ENCODE measurements at regions of chr20 and their contacts with region 1.

Region 1: GRCh38 chr20:58388882-58389323 is at the start of gene VAPB:
- DNase-seq: peak; percentile 98
- H3K4me3 ChIP-seq: peak within 1 kb of the TSS; percentile 78 to 85 (median 84)
- H3K27ac ChIP-seq: peak within 1 kb of the TSS; percentile 90 to 95 (median 93)
- H3K4me1 ChIP-seq: peaks cover 38 to 48% (median 42%) of the 10 kb centered on the region in 4 donors
- H3K27me3 ChIP-seq: no peaks in the 10 kb centered on the region
- CTCF ChIP-seq: peak in 2 of 3 experiments; percentile 10
- EP300 ChIP-seq: peak; percentile 75
- POLR2A ChIP-seq: peak; percentile 43
- total RNA-seq, gene VAPB: 24.9 to 39.0 (median 28.3) TPM

Region 2: DNA sequence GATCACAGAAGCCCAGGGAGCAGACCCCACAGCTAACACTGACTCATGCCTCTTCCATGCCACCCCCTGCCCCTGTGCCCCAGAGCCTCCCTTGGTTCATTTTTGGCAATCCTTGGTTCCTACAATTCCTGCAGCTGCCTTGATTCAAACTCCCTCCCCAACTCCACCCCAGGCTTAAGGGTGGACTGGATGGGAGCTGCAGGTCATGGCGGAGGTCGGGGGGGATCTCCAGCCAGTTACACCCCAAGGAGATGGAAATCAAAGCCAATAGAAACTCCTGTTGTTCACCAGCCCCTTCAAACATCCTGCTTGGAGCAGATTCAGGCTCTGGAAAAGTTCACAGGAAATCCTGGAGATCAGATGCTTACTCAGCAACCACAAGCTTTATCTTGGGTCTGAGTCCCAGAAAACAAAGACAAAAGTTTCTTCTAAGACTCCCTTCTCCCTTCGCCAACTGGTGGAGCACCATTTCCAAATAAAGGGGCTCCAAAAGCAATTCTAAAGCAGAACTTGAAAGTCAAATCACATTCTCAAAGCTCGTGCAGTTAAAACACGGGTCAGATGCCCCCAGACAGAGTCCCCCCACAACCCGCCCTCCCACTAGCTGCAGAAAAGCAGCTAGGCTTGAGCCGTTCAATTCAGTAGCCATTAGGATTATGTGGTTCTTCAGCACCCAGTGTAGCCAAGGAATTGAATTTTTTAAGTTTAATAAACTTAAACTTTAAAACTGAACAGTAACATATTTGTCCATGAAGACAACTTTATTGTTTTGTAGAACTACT is 310.0 kb before region 1 on chr20:
- intact Hi-C with region 1: no loop called
- DNase-seq: peak; percentile 74
- H3K4me3 ChIP-seq: no peak overlapping the region
- H3K27ac ChIP-seq: peak overlapping the region in 1 of 4 donors; percentile 17
- H3K4me1 ChIP-seq: peaks cover 0 to 15% (median 7%) of the 10 kb centered on the region in 4 donors
- H3K27me3 ChIP-seq: no peaks in the 10 kb centered on the region
- CTCF ChIP-seq: no peak
- EP300 ChIP-seq: no peak
- POLR2A ChIP-seq: no peak

Region 3: DNA sequence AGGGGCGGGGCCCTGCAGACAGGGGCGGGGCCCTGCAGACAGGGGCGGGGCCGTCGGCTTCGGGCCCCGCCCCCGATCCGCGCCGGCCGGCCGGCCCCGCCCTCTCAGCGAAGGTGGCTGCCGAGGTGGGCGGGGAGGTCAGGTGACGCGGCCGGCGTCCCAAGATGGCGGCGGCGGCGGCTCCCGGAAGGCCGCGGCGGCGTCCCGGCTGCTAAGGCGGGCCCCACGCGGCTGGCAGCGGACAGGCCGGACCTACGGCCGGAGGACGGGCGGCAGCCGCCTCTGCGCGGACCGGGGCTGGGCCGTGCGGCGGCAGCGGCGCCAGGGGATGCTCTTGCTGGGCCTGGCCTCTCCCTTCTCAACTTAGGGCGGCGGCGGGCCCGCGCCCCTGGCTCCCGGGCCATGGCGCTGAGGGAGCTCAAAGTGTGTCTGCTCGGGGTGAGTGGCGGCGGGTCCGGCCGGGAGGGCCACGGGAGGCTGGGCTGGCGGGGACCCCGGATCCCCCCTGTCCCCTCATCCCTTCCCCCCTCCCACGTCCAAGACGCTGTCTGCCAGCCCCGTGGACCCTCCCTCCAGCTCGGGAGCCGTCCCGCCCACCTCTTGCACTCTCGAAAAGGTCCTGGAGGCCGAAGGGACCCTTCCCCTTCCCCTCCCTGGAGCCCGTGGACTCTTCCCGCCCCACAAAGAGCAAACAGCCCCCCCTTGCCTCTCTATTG is 79.2 kb before region 1 on chr20 and contains the start of gene RAB22A:
- intact Hi-C with region 1: loop called (anchors 5 kb)
- DNase-seq: no peak
- H3K4me3 ChIP-seq: peak within 1 kb of the TSS; percentile 87 to 100 (median 94)
- H3K27ac ChIP-seq: peak within 1 kb of the TSS; percentile 79 to 90 (median 88)
- H3K4me1 ChIP-seq: peaks cover 15 to 54% (median 44%) of the 10 kb centered on the region in 4 donors
- H3K27me3 ChIP-seq: no peaks in the 10 kb centered on the region
- CTCF ChIP-seq: no peak
- EP300 ChIP-seq: no peak
- POLR2A ChIP-seq: no peak
- total RNA-seq, gene RAB22A: 17.9 to 24.0 (median 20.4) TPM

Region 4: GRCh38 chr20:58447511-58448391 is 58.8 kb after region 1 on chr20:
- intact Hi-C with region 1: no loop called
- DNase-seq: no peak
- H3K4me3 ChIP-seq: no peak overlapping the region
- H3K27ac ChIP-seq: no peak overlapping the region
- H3K4me1 ChIP-seq: peaks cover 0 to 25% (median 16%) of the 10 kb centered on the region in 4 donors
- H3K27me3 ChIP-seq: no peaks in the 10 kb centered on the region
- CTCF ChIP-seq: peak; percentile 58 to 69 (median 60)
- EP300 ChIP-seq: no peak
- POLR2A ChIP-seq: no peak